Uterus (tissue), 4 donors: ENCODE measurements at regions of chr16 and their contacts with region 1.

Region 1: DNA sequence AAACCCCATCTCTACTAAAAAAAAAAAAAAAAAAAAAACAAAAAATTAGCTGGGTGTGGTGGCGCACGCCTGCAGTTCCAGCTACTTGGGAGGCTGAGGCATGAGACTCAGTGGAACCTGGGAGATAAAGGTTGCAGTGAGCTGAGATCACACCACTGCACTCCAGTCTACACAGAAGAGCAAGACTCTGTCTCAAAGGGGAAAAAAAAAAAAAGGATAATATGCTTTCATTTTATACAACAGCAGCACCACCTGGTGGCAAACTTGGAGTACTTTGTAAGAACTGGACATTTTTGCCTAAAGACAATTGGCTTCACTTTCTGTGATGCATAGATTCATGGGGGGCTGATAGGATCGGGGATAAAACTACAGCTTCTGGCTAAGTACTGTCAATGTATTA is 8.5 kb downstream of the CHTF8 start:
- DNase-seq: peak in 1 of 2 donors; percentile 56
- H3K4me3 ChIP-seq: no peak overlapping the region
- H3K27ac ChIP-seq: no peak overlapping the region
- H3K4me1 ChIP-seq: no peaks in the 10 kb centered on the region
- H3K27me3 ChIP-seq: no peaks in the 10 kb centered on the region
- CTCF ChIP-seq: peak; percentile 48 to 69 (median 67)
- POLR2A ChIP-seq: no peak

Region 2: GRCh38 chr16:68528686-68529379 is 595.1 kb before region 1 on chr16:
- intact Hi-C with region 1: loop called (anchors 5 kb)
- DNase-seq: peak; percentile 85 to 86
- H3K4me3 ChIP-seq: peak overlapping the region; percentile 19 to 21
- H3K27ac ChIP-seq: no peak overlapping the region
- H3K4me1 ChIP-seq: peaks cover 5 to 8% of the 10 kb centered on the region in 2 donors
- H3K27me3 ChIP-seq: no peaks in the 10 kb centered on the region
- CTCF ChIP-seq: peak; percentile 88 to 97 (median 92)
- POLR2A ChIP-seq: no peak

Region 3: GRCh38 chr16:69083329-69083941 is 40.5 kb before region 1 on chr16:
- intact Hi-C with region 1: no loop called
- DNase-seq: no peak
- H3K4me3 ChIP-seq: no peak overlapping the region
- H3K27ac ChIP-seq: no peak overlapping the region
- H3K4me1 ChIP-seq: no peaks in the 10 kb centered on the region
- H3K27me3 ChIP-seq: no peaks in the 10 kb centered on the region
- CTCF ChIP-seq: no peak
- POLR2A ChIP-seq: no peak

Region 4: DNA sequence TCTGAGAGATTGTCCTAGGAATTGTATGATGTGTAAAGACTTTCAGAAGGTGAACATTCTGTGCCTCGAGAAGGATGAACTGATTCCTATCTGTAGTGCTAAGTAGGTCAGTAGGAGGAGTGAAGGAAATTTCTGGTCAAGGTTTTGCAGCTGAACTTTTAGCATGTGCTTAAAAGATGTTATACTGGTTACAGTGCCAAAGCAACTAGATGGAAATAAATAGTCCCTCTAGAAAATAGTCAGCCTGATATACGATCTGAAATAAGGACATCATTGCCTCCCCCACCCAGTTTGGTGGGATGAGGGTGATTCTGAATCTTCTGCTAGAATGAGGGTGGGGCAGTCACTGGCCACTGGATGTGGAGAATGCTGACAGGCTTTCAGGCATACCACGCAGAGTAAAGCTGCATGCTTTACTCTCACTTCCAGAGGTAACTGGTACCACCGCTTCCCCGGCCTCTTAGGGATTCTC is 130.0 kb after region 1 on chr16:
- intact Hi-C with region 1: no loop called
- DNase-seq: peak; percentile 46 to 54
- H3K4me3 ChIP-seq: no peak overlapping the region
- H3K27ac ChIP-seq: peak overlapping the region; percentile 78 to 88
- H3K4me1 ChIP-seq: peaks cover 0 to 10% of the 10 kb centered on the region in 2 donors
- H3K27me3 ChIP-seq: no peaks in the 10 kb centered on the region
- CTCF ChIP-seq: no peak
- POLR2A ChIP-seq: no peak